HEK293 (cell line): ENCODE measurements at regions of chr1 and their contacts with region 1.

Region 1: DNA sequence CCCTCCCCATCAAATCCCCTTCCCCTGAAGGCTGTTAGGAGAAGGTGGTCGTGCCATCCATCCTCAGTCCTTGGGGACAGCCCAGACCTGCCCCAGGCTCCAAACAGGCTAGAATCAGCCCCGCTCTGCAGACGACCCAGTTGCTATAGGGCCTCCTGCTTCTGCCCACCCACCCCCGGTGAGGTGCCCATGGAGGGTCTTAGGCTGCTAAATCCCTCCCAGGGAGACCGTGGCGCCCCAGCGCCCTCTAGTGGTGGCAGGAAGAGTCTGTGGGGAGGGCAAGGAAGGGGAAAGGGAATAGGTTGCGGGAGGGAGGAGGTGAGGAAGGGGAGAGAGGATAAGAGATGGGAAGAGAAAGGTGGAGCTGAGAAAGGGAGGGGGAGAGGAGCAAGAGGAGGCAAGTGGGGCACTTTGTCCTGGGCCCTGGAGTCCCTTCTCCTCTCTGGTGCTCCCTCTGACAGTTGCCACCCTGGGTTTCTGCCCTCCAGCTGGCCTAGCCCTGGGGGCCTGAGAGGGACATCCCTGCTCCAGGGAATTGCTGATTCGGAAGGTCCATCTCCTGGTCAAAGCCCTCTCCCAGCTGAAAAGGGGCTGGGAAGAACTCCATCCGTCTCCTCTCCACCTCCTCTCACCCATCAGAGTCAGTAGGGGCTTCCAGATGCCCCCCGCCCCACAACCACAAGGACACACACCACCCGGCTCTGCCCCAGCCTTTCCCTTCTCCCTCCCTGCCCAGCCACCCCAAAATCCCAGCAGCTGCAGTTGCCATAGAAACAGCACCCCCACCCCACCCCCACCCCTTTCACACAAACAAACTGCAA is 55.4 kb downstream of the CAMK2N1 start:
- H3K4me3 ChIP-seq: no peak overlapping the region
- H3K27ac ChIP-seq: no peak overlapping the region
- H3K4me1 ChIP-seq: no peaks in the 10 kb centered on the region
- CTCF ChIP-seq: peak; percentile 84

Region 2: GRCh38 chr1:19809044-19809750 is 621.4 kb before region 1 on chr1:
- CTCF ChIA-PET with region 1: no interaction called
- POLR2A ChIA-PET with region 1: no interaction called
- H3K4me3 ChIP-seq: no peak overlapping the region
- H3K27ac ChIP-seq: no peak overlapping the region
- H3K4me1 ChIP-seq: peaks cover 4% of the 10 kb centered on the region; the same call in 1 of the 2 replicates
- CTCF ChIP-seq: no peak

Region 3: GRCh38 chr1:20212685-20213331 is 217.8 kb before region 1 on chr1:
- CTCF ChIA-PET with region 1: interaction called, 20 read pairs
- POLR2A ChIA-PET with region 1: no interaction called
- H3K4me3 ChIP-seq: no peak overlapping the region
- H3K27ac ChIP-seq: no peak overlapping the region
- H3K4me1 ChIP-seq: no peaks in the 10 kb centered on the region
- CTCF ChIP-seq: peak; percentile 68; the same call in 1 of the 2 replicates

Region 4: DNA sequence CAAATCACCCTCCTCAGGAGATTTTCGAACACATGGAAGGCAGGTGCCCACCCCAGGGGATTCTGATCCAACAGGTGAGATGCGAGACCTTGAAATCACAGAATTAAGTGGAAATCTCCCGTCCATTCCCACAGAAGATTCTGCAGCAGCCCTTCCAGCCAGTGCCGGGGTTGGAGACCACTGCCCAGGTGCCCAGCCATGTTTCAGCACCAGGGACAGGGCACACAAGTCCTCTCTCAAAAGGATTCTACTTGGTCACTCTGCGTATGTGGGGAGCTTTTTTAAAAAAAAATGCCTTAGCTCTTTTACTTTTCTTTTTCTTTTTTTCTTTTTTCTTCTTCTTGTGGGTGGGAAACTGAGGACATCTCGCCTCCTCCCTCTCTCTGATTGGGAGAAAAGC is 59.2 kb before region 1 on chr1:
- CTCF ChIA-PET with region 1: interaction called, 23 read pairs
- POLR2A ChIA-PET with region 1: no interaction called
- H3K4me3 ChIP-seq: no peak overlapping the region
- H3K27ac ChIP-seq: no peak overlapping the region
- H3K4me1 ChIP-seq: 0 out of 2 replicates have a peak, but pooled peaks cover 5% of the 10 kb centered on the region
- CTCF ChIP-seq: no peak

Region 5: GRCh38 chr1:20376880-20377494 is 53.6 kb before region 1 on chr1:
- CTCF ChIA-PET with region 1: interaction called, 23 read pairs
- POLR2A ChIA-PET with region 1: interaction called, 7 read pairs
- H3K4me3 ChIP-seq: no peak overlapping the region
- H3K27ac ChIP-seq: no peak overlapping the region
- H3K4me1 ChIP-seq: no peaks in the 10 kb centered on the region
- CTCF ChIP-seq: peak; percentile 32; the same call in 1 of the 2 replicates

Region 6: DNA sequence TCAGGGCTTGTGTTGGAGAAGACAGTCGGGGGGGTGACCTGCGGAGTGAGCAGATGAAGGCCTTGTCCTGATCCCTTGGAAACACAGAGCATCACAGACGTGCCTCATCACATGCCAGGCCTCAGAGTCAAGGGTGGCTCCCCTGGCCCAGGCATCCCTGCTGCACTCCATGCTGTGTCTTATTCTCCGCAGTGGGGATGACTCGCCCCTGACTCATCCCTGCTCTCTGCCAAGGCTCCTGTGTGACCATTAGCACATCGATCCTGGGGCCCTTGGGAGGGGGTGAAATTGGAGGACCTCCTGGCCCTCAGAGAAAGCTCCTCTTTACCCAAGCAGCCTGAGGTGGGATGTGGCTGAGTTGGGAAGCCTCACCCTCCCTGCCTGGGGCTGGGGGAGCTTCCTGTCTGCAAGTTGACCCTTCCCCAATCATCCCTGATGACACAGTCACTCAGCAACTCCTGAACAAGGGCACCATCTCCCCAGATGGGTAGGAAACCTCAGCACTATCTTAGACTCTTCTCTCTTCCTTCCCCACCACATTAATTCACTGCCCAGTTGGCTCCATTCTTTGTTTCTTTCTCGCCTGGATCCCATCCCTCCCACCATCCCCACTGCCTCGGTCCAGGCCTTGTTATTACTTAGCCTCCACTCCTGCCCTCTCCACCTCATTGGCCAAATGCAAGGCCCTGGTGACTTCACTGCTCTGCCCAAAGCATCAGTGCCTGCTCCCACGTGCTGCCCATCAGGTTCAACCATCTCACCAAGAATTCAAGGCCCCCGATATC is 19.2 kb before region 1 on chr1:
- CTCF ChIA-PET with region 1: interaction called, 16 read pairs
- POLR2A ChIA-PET with region 1: no interaction called
- H3K4me3 ChIP-seq: no peak overlapping the region
- H3K27ac ChIP-seq: no peak overlapping the region
- H3K4me1 ChIP-seq: no peaks in the 10 kb centered on the region
- CTCF ChIP-seq: no peak

Region 7: GRCh38 chr1:20440785-20441200 is 10.2 kb after region 1 on chr1:
- CTCF ChIA-PET with region 1: interaction called, 36 read pairs
- POLR2A ChIA-PET with region 1: interaction called, 3 read pairs
- H3K4me3 ChIP-seq: no peak overlapping the region
- H3K27ac ChIP-seq: no peak overlapping the region
- H3K4me1 ChIP-seq: no peaks in the 10 kb centered on the region
- CTCF ChIP-seq: no peak